ENCODE measurements at regions of chr7 and their contacts with region 1.

Region 1: DNA sequence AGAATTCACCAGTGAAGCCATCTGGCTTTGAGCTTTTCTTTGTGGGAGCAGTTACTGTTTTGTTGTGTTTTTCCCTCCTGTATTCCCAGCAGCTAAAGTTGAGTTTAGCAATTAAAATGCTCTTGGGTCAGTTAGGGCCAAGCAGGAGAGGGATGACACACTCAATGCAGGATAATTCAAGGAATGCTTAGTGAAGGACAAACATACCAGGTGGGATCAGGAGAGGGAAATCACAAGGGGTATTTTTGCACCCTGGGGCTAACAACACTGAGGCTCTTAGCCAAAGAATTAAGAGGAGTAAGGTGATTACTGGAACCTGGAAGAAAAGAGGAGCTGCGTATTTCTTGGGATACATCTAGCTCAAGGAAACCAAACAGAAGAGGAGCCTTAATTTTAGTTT is 82.4 kb upstream of the KCND2 start:
- DNase-seq: no peak
- ATAC-seq: no peak

Region 2: GRCh38 chr7:118369987-118370386 is 1820.6 kb before region 1 on chr7:
- intact Hi-C with region 1: loop called (anchors 10 kb)
- DNase-seq: no peak
- ATAC-seq: no peak

Region 3: GRCh38 chr7:120052884-120053382 is 137.6 kb before region 1 on chr7:
- intact Hi-C with region 1: no loop called
- DNase-seq: peak; percentile 60
- ATAC-seq: peak; percentile 92

Measured in sciatic nerve (tissue), 2 donors.